ENCODE measurements at regions of chr5 and their contacts with region 1.

Region 1: DNA sequence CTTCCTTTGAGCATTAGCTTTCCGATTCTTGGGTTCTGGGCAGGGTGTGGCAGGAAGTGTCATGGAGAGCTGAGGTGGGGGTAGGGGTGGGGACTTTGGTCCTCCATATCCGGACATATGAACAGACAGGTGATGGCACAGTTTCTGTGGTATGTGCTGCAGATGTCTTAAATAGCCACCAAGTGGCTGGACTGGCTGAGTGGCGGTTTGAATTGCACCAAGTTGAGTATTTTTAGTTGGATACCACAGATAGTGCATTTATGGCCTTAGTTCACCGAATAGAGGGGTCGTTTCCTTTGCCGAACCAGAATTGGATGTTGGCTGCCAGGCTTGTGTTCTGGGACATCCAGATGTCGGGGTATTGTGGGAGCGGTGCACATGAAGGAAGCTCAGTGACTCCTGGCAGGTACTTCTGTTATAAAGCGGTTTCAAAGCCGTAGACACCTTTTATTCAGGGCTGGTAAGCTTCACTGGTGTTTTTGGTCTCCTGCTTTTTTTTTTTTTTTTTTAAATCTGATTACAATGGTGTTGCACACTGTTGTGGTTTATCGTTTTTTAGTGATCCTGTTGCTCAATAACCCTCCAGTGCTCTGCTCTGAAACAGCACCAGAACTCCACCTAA is 15.1 kb upstream of the TNFAIP8 start:
- DNase-seq: peak; percentile 65
- H3K4me3 Mint-ChIP-seq: peak overlapping the region; percentile 78
- H3K27ac Mint-ChIP-seq: peak overlapping the region; percentile 98
- H3K4me1 Mint-ChIP-seq: peaks cover 89% of the 10 kb centered on the region
- H3K27me3 Mint-ChIP-seq: no peaks in the 10 kb centered on the region

Region 2: DNA sequence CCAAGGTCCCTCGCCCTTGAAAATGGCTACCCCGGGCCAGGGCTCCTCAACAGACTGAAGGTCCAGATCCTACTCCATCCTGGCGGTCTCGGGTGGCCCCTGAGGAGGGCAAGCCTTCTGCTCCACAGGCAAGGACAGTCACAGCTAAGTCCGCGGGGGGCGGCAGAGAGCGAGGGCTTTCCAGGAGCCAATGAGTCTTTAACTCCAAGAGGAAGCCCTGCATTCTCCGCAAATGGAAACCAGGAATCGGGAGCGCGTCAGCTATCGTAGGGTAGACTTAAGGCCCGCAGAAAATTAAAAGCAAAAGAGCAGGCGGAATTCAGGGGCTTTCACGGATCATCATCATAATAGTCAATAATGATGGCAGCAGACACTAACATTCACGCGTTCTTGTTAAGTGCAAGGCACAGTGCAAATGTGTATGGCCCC is 72.7 kb before region 1 on chr5:
- intact Hi-C with region 1: loop called (anchors 1 kb)
- DNase-seq: peak; percentile 70
- H3K4me3 Mint-ChIP-seq: peak overlapping the region; percentile 99
- H3K27ac Mint-ChIP-seq: peak overlapping the region; percentile 95
- H3K4me1 Mint-ChIP-seq: peaks cover 51% of the 10 kb centered on the region
- H3K27me3 Mint-ChIP-seq: no peaks in the 10 kb centered on the region

Region 3: DNA sequence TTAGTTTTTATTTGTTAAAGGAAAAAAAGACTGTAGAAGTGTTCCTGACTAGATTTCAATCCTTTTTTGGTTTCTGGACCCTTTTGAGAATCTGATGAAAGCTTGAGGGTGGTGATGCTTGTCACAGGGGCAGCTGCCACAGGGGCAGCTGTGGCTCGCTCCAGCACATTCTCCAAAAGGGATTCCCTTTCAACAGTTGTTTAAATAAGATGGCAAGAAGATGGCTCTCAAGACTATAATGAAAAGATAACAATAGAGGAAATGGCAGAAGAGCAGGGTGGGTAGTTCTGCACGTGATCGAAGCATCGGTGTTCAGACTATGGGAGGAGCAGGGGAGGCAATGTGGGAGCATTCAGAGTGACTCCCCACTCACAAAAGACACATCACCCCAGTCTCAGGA is 31.4 kb before region 1 on chr5:
- intact Hi-C with region 1: loop called (anchors 1 kb)
- DNase-seq: no peak
- H3K4me3 Mint-ChIP-seq: peak overlapping the region; percentile 67
- H3K27ac Mint-ChIP-seq: peak overlapping the region; percentile 96
- H3K4me1 Mint-ChIP-seq: peaks cover 88% of the 10 kb centered on the region
- H3K27me3 Mint-ChIP-seq: no peaks in the 10 kb centered on the region

Region 4: DNA sequence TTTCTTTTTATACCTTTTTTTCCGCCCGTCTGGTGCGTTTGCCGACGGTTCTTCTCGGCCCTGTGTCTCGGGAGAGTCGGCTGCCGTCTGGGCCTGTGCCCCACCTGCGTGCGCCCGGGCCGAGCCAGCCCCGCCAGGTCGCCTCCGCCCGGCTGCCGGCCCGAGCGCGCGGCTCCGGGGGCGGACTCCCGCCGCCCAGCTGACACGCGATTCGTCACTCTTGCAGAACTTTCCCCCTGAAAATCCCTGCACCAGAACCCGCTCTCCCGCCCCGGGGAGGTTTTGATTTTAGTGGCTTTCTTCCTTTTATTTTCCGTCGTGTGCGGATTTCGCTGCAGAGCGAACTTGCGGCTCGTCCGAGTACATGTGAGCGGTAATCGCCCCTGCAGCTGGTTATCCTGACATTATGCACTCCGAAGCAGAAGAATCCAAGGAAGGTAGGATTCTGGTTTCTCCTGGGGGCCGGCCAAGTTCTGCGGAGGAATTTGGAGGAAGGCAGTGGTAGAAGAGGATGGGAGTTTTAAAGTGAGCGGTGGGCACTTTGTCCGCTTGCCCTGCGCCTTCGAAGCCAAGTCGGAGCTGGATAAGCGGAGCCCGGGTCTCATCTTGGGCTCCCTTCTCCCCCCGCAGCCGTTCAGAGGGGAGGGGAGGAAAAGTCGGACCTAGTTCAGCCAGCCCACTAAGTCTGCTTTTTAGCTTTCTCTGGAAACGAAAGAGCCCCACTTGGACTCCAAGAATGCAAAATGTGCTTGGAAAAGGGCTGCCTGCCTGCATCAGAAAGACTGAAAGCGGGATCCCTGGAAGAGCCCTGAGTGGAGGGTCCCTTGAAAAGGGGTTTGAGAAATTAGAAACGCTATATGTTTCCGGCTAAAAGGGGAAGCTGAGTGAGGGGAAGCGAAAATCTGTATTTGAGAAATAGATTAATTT is 15.2 kb after region 1 on chr5 and contains the start of gene TNFAIP8:
- intact Hi-C with region 1: loop called (anchors 1 kb)
- DNase-seq: peak; percentile 46
- H3K4me3 Mint-ChIP-seq: peak within 1 kb of the TSS; percentile 99
- H3K27ac Mint-ChIP-seq: peak within 1 kb of the TSS; percentile 93
- H3K4me1 Mint-ChIP-seq: peaks cover 76% of the 10 kb centered on the region
- H3K27me3 Mint-ChIP-seq: no peaks in the 10 kb centered on the region
- total RNA-seq, gene TNFAIP8: 112 and 117 TPM in 2 replicates

Region 5: DNA sequence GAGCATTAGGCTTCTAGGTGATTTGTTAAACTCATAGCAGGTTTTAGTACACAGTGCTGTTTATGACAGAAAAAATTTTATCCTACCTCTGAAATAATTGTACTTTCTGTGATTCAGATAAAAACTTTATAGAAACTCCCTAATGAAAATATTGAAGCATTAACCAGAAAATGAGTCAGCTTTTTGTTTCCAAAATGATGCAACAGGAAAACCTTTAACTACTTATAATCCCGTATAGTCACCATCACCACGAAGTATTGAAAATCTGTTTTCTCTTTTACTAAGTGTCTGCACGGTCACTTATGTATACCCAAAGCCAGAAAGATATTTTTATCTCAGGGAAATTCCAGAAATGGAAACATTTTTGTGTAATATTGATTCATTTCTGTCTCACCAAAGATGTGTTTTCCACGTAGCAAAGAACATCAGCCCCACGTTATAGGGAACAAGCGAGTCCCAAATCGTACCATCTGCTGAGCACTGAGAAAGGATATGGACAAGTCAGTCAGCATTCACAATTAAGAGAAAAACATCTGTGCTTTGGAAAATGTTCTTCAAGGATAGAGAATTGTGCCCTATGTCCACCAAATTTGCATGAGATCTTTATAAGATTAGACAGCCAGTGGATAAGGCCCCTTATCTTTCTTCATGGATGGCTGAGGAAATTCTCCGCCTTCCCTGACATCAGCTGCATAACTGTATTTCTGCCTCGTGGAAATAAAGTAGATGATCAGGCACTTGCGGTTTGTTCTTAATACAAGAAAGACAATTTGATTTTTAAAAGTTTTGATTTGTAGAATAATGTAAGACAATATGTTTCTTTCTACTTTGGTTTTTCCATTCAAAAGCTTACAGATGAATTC is 57.0 kb after region 1 on chr5:
- intact Hi-C with region 1: loop called (anchors 1 kb)
- DNase-seq: no peak
- H3K4me3 Mint-ChIP-seq: peak overlapping the region; percentile 17
- H3K27ac Mint-ChIP-seq: peak overlapping the region; percentile 87
- H3K4me1 Mint-ChIP-seq: peaks cover 59% of the 10 kb centered on the region
- H3K27me3 Mint-ChIP-seq: no peaks in the 10 kb centered on the region

Measured in activated T-helper 2 cell treated with anti-CD3 and anti-CD28 coated beads, Interferon-gamma antibody, Interleukin-2, Interleukin-4, amounts not matched to agents 10 μg/mL and 5 μg/mL and 100 μg/mL, durations not matched to agents 14 hours and 24 hours and 36 hours (primary cell).